AG04449 (cell line): ENCODE measurements at regions of chr12 and their contacts with region 1.

Region 1: DNA sequence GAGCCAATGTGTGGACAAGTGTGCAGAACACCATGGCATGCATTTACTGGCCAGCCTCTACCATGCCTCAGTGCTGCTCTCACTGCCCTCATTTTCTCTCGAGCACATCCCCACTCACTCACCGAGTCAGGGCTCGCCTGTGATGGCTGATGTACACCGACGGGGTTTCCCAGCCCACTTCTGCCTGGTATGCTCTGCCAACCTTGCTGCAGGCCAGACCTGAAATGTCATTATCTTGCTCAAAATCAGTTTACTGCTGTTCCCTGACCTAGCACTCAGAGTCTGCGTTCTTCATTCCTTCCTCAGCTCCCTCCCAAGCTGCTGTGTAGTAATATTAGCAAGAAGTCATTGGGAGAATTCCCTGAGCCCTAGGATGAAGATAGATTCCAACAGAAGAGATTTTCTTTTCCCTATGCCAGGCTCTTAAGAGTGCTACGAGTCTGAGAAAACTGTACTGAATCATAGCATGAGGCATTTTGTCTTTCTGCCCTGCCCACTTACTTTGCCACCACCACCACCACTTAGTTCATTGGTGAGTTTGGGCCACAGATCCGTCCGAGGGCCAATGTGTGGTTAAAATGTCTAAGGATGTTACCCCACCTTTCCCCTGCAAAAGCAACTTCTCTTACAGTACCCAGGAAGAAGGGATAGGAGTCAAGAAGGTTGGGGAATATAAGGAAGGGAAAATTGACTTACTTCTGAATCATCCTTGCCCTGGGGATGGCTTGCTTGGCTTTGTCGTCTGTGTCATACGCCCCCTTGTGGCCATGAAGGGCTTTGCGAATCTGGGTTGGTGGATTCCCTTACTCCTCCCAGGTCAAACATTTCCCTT is 51.0 kb downstream of the BMAL2 start:
- DNase-seq: peak; percentile 28
- H3K4me3 ChIP-seq: no peak overlapping the region
- CTCF ChIP-seq: peak; percentile 88

Region 2: GRCh38 chr12:26953447-26953846 is 430.2 kb before region 1 on chr12:
- CTCF ChIA-PET with region 1: no interaction called
- POLR2A ChIA-PET with region 1: no interaction called
- DNase-seq: no peak
- H3K4me3 ChIP-seq: no peak overlapping the region
- CTCF ChIP-seq: no peak

Region 3: DNA sequence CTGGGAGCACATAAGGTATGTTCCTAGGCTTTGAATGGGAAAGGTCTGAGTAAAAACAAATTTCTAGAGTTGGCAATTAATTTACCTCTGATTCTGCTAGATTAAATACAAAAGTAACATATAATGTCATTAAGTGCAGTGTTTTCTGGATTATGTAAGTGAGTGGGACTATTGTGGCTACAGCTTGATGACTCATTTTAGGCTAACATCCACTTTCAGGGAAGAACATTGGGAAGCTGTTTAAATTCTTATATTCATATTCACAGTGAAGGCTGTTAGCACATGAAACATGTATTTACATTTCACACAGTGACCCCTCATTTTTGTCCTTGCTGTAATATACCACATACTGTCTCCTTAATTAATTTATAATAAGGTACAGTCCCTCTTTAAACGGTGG is 64.2 kb before region 1 on chr12:
- CTCF ChIA-PET with region 1: interaction called, 19 read pairs
- POLR2A ChIA-PET with region 1: no interaction called
- DNase-seq: no peak
- H3K4me3 ChIP-seq: no peak overlapping the region
- CTCF ChIP-seq: no peak

Region 4: DNA sequence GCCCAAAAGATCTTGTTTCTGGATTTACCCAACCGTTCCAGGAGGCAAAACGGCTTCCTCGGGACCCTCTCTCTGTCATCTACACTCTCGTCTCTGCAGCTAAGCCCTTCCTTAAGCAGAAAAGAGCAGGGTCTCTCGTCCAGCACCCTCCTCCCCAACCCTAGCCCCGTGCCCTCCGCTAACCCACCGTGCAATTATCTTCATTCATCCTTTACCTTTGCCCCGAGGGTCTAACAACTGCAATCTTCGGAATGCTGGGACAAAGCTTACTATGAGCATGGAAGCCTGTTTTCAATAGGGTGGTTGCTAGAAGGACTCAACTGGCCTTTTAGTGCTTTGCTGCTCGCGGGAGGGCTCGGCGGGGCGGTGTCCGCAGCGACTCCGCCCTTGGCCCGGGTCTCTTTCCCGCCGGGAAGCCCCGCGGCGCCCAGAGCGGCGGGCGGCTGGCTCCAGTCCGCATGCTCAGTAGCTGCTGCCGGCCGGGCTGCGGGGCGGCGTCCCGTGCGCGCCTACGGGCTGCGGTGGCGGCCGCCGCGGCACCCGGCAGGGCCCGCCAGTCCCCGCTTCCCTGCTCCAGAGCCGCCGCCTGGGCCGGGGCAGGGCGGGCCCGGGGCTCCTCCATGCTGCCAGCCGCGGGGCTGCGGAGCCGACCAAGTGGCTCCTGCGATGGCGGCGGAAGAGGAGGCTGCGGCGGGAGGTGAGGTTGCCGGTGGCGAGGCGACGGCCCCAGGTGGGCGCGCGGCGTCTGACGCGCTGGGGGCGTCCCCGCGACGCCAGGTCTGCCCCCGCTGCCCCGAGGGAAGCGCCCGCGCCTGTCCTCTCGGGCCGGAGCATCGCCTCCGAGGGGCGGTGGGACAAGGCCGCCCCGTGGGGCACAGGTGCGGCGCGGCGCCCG is 51.0 kb before region 1 on chr12 and contains the start of gene BMAL2:
- CTCF ChIA-PET with region 1: interaction called, 38 read pairs
- POLR2A ChIA-PET with region 1: no interaction called
- DNase-seq: no peak
- H3K4me3 ChIP-seq: peak within 1 kb of the TSS; percentile 69
- CTCF ChIP-seq: no peak

Region 5: DNA sequence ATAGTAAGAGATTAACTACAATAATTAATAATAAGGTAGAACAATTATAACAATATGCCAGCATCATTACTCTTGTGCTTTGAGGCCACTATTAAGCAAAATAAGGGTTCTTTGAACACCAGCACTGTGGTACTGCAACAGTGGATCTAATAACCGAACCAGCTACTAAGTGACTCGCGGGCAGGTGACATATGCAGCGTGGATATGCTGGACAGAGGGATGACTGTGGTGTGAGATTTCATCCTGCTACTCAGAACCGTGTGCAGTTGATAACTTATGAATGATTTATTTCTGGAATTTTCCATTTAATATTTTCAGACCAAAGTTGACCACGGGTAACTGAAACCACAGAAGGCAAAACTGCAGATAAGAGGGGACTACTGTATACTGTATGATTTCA is 16.6 kb before region 1 on chr12:
- CTCF ChIA-PET with region 1: interaction called, 80 read pairs
- POLR2A ChIA-PET with region 1: no interaction called
- DNase-seq: no peak
- H3K4me3 ChIP-seq: no peak overlapping the region
- CTCF ChIP-seq: no peak

Region 6: GRCh38 chr12:27398466-27398865 is 14.8 kb after region 1 on chr12:
- CTCF ChIA-PET with region 1: interaction called, 23 read pairs
- POLR2A ChIA-PET with region 1: no interaction called
- DNase-seq: no peak
- H3K4me3 ChIP-seq: no peak overlapping the region
- CTCF ChIP-seq: no peak

Region 7: GRCh38 chr12:27549801-27550652 is 166.4 kb after region 1 on chr12:
- CTCF ChIA-PET with region 1: no interaction called
- POLR2A ChIA-PET with region 1: no interaction called
- DNase-seq: peak; percentile 76
- H3K4me3 ChIP-seq: no peak overlapping the region; the same call in 1 of the 2 replicates
- CTCF ChIP-seq: no peak

Region 8: DNA sequence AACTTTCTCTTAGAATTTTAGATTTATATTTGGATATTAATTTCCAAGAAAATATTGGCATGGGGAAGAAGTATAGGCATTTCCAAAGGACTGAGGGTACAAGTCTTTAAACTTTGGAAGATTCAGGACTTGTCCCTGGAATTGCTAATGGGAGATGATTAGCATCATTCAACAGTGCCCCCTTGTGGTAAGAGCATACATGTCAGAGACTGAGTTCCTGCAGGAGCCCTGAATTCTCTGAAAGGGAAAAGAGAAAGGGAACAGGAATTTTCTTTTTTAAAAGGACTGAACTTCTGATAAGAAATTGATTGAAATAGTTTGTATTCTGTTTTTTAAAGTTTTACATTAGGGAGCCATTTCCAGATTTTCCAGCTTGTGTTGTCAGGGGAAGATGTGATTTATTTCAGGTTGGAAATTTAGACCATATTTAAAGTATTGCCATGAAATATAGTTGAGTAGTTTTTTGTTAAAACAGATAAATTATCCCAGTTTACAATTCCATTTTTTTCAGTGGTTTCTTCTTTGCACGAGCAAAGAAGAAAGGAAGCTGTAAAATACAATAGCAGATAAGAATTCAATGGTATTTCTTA is 268.6 kb after region 1 on chr12:
- CTCF ChIA-PET with region 1: interaction called, 10 read pairs
- POLR2A ChIA-PET with region 1: no interaction called
- DNase-seq: peak; percentile 41
- H3K4me3 ChIP-seq: no peak overlapping the region
- CTCF ChIP-seq: peak; percentile 74